ENCODE measurements at regions of chrX and their contacts with region 1.

Region 1: GRCh38 chrX:47530049-47530448 is 31.0 kb upstream of the ARAF start:
- DNase-seq: no peak
- H3K4me3 ChIP-seq: no peak overlapping the region
- H3K27ac ChIP-seq: no peak overlapping the region
- H3K4me1 ChIP-seq: no peaks in the 10 kb centered on the region
- H3K27me3 ChIP-seq: peaks cover 0 to 16% of the 10 kb centered on the region in 2 donors
- CTCF ChIP-seq: no peak
- POLR2A ChIP-seq: no peak

Region 2: DNA sequence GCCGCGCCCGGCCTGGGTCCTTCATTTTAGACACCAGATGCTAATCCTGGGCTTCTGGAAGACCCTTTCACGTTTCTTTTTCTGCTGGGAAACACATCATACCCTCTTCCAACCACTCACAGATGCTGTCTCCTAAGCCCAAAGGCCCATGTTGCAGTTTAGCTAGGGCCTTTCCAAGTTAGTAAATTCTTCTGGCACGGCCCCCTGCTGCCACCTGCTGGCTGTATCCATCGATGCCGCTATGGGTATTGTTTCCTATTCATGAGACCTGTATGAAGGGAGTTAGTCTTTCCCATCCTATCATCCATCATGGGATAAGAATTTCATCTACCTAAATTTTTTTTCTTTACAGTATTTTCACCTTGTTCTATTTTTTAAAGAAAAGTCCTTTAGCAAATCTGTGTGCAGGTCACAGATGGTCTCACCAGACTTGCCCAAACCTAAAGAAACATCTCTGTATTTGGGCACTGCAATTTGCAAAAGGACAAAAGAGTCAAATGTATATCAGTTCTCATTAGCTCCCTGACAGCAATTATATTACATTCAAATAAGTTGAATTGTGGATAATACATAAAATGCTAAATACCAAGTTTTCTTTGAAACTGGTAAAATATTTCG is 733.4 kb before region 1 on chrX:
- intact Hi-C with region 1: no loop called
- DNase-seq: peak; percentile 68 to 72
- H3K4me3 ChIP-seq: no peak overlapping the region
- H3K27ac ChIP-seq: no peak overlapping the region
- H3K4me1 ChIP-seq: no peaks in the 10 kb centered on the region
- H3K27me3 ChIP-seq: peaks cover 0 to 13% of the 10 kb centered on the region in 2 donors
- CTCF ChIP-seq: peak; percentile 39 to 63 (median 54)
- POLR2A ChIP-seq: no peak

Region 3: DNA sequence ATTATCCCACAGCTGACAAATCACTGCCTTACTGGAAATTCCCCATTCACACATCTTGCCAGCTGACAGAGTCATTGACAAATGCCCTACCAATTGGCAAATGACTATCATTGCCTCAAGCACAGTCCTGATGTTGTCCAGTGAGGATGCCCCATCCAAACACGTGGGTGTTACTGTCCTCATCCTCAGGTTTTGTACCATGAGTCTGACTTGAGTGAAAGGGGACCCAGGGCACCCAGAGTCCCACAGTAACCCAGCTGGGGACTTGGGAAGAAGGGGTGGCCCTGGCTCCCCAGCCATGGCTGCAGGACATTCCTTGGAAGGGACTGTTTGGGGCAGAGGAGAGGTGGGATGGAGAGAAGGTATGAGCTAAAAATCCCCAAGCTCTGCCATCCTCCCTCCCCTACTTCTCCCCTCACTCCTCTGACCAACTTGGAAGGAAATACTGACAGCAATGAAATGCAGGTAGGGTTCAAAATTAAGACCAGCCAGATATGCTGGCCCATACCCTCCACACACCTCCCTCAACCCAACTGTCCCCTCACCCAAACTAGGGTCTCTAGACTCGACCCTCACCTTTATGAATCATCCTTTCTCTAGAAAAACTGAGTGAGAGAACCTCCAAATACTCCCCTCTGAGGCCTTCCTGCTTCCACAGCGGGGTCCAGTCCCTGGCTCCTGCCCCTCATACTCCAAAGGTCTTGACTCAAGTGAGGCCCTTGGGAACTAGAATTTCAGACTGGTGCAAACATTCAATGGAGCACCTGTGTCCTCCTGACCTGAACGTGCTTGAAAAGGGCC is 57.2 kb after region 1 on chrX:
- intact Hi-C with region 1: loop called (anchors 5 kb)
- DNase-seq: no peak
- H3K4me3 ChIP-seq: no peak overlapping the region
- H3K27ac ChIP-seq: no peak overlapping the region
- H3K4me1 ChIP-seq: no peaks in the 10 kb centered on the region
- H3K27me3 ChIP-seq: peaks cover 0 to 27% of the 10 kb centered on the region in 2 donors
- CTCF ChIP-seq: no peak
- POLR2A ChIP-seq: no peak

Region 4: DNA sequence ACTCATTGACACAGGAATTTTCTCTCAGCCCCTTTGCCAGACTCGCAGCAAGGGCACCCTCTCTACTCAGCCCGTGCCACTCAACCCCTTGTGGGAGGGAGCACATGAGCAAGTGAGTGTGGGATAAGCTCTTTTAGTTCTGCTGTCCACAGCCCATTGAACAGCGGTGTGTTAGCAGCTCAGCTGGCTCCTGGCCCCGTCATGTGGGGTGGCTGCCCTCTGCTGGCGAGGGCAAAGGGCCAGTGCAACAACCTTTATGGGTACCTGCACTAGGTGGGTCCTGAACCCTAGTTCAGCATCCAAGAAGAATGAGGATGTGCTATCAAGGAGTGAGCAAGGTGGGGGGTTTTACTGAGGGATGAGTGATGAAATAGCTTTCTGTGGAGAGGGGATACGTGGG is 221.6 kb after region 1 on chrX:
- intact Hi-C with region 1: loop called (anchors 5 kb)
- DNase-seq: no peak
- H3K4me3 ChIP-seq: no peak overlapping the region
- H3K27ac ChIP-seq: no peak overlapping the region
- H3K4me1 ChIP-seq: no peaks in the 10 kb centered on the region
- H3K27me3 ChIP-seq: peaks cover 0 to 75% of the 10 kb centered on the region in 2 donors
- CTCF ChIP-seq: no peak
- POLR2A ChIP-seq: no peak

Measured in breast epithelium (tissue), 4 donors.